SK-N-SH (cell line): ENCODE measurements at regions of chr5 and their contacts with region 1.

Region 1: GRCh38 chr5:138352071-138352721 is at the start of gene KDM3B:
- DNase-seq: peak; percentile 99
- H3K4me3 ChIP-seq: peak within 1 kb of the TSS; percentile 81 to 92
- H3K27ac ChIP-seq: peak within 1 kb of the TSS; percentile 81 to 84
- H3K4me1 ChIP-seq: peaks cover 7 to 9% of the 10 kb centered on the region in 2 experiments; a peak in 3 of 4 replicates
- H3K27me3 ChIP-seq: no peaks in the 10 kb centered on the region
- CTCF ChIP-seq: peak; percentile 99
- EP300 ChIP-seq: no peak
- RAD21 ChIP-seq: peak; percentile 18; the same call in 1 of the 2 replicates
- polyA plus RNA-seq, gene KDM3B: 22.4 and 24.5 TPM in 2 replicates

Region 2: DNA sequence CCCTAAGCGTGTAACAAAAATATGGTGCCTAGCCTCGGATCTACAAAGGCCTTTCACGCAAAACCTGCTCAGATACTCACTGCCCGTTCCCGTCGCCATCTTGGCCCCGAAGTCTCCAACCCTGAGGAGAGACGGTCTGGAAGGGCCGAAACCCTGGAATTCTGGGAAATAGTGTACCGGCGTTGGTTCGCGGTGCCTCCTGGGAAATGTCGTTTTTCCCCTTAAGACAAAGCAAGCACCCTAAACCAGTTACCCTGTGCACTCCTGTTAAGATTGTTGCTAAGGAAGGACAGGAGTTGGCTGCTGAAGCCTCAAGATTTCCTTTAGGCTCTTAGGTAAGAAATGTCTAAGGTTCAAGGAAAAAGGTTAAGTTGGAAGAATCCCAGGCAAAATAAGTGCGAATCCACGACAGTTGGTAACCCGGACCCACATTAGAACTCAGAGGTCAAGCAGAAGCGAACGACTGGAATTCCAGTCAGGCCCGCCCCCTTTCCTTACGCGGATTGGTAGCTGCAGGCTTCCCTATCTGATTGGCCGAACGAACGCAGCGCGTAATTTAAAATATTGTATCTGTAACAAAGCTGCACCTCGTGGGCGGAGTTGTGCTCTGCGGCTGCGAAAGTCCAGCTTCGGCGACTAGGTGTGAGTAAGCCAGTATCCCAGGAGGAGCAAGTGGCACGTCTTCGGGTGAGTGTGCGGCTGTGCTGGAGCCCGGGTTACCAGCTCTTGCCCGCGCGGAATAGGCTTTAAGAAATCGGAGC is 173.5 kb before region 1 on chr5 and contains the starts of genes BRD8 and KIF20A:
- CTCF ChIA-PET with region 1: interaction called, 13 read pairs
- POLR2A ChIA-PET with region 1: interaction called, 4 read pairs
- DNase-seq: peak; percentile 87
- H3K4me3 ChIP-seq: peak within 1 kb of the TSS; percentile 81 to 90
- H3K27ac ChIP-seq: peak within 1 kb of the TSS; percentile 86 to 97
- H3K4me1 ChIP-seq: peaks cover 0 to 13% of the 10 kb centered on the region in 2 experiments; a peak in 2 of 4 replicates
- H3K27me3 ChIP-seq: no peaks in the 10 kb centered on the region
- CTCF ChIP-seq: no peak
- EP300 ChIP-seq: peak in 1 of 2 experiments; percentile 19; a peak in 1 of 4 replicates
- RAD21 ChIP-seq: no peak
- polyA plus RNA-seq, gene BRD8: 46.2 and 64.4 TPM in 2 replicates
- polyA plus RNA-seq, gene KIF20A: 16.0 and 17.4 TPM in 2 replicates

Region 3: DNA sequence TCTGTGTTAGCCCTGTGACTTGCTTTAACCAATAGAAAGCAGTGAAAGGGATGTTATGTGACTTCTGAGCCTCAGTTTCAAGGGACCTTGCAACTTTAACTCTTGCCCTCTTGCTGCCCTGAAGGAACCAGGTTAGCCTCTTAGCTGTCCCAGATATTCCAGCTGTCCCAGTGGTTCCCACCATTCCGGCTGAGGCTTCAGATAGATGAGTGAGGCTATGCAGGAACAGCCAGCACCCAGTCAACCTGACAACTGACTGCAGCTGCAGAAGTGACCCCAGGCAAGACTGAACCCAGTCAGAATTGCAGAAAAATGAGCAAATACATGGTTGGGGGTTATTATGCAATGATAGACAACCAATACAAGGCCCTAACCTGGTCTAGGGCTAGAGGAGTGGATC is 128.7 kb before region 1 on chr5:
- CTCF ChIA-PET with region 1: interaction called, 30 read pairs
- POLR2A ChIA-PET with region 1: no interaction called
- DNase-seq: no peak
- H3K4me3 ChIP-seq: no peak overlapping the region
- H3K27ac ChIP-seq: no peak overlapping the region
- H3K4me1 ChIP-seq: no peaks in the 10 kb centered on the region
- H3K27me3 ChIP-seq: no peaks in the 10 kb centered on the region; the same call in 1 of the 2 replicates
- CTCF ChIP-seq: no peak
- EP300 ChIP-seq: no peak
- RAD21 ChIP-seq: no peak

Region 4: DNA sequence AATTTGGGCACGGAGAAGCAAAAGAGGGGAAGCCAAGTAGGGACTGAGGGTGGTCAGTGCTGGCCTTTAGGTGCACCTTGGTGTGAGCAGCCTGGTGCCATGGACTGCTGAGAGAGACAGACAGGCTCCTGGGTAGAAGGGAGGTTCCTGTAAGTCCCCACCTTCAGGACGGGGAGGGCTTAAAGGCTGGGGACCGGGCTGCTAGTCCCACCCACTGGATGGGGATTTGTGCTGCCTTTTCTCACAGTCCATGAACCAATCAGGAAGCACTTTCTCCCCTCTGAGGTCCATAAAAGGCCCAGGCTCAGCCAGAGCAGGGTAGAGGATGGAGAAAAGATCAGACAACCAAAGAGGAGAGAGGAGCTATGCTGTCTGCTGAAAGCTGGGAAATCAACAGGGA is 35.8 kb before region 1 on chr5:
- CTCF ChIA-PET with region 1: interaction called, 18 read pairs
- POLR2A ChIA-PET with region 1: no interaction called
- DNase-seq: no peak
- H3K4me3 ChIP-seq: no peak overlapping the region
- H3K27ac ChIP-seq: no peak overlapping the region
- H3K4me1 ChIP-seq: no peaks in the 10 kb centered on the region
- H3K27me3 ChIP-seq: no peaks in the 10 kb centered on the region
- CTCF ChIP-seq: no peak
- EP300 ChIP-seq: no peak
- RAD21 ChIP-seq: no peak

Region 5: GRCh38 chr5:138369706-138370105 is 17.5 kb after region 1 on chr5:
- CTCF ChIA-PET with region 1: interaction called, 93 read pairs
- POLR2A ChIA-PET with region 1: interaction called, 4 read pairs
- DNase-seq: no peak
- H3K4me3 ChIP-seq: no peak overlapping the region
- H3K27ac ChIP-seq: no peak overlapping the region
- H3K4me1 ChIP-seq: no peaks in the 10 kb centered on the region; a peak in 1 of 4 replicates
- H3K27me3 ChIP-seq: no peaks in the 10 kb centered on the region
- CTCF ChIP-seq: no peak
- EP300 ChIP-seq: no peak
- RAD21 ChIP-seq: no peak

Region 6: GRCh38 chr5:138438724-138439476 is 86.7 kb after region 1 on chr5 and contains the start of gene REEP2:
- CTCF ChIA-PET with region 1: interaction called, 12 read pairs
- POLR2A ChIA-PET with region 1: interaction called, 3 read pairs
- DNase-seq: peak; percentile 94
- H3K4me3 ChIP-seq: peak within 1 kb of the TSS; percentile 65 to 84
- H3K27ac ChIP-seq: peak within 1 kb of the TSS; percentile 18 to 84; a peak in 3 of 4 replicates
- H3K4me1 ChIP-seq: peaks cover 0 to 21% of the 10 kb centered on the region in 2 experiments; a peak in 1 of 4 replicates
- H3K27me3 ChIP-seq: no peaks in the 10 kb centered on the region
- CTCF ChIP-seq: no peak
- EP300 ChIP-seq: no peak
- RAD21 ChIP-seq: no peak
- polyA plus RNA-seq, gene REEP2: 25.4 and 31.2 TPM in 2 replicates

Region 7: GRCh38 chr5:138716456-138716924 is 364.3 kb after region 1 on chr5:
- CTCF ChIA-PET with region 1: no interaction called
- POLR2A ChIA-PET with region 1: no interaction called
- DNase-seq: peak; percentile 48
- H3K4me3 ChIP-seq: no peak overlapping the region
- H3K27ac ChIP-seq: no peak overlapping the region
- H3K4me1 ChIP-seq: peaks cover 0 to 2% of the 10 kb centered on the region in 2 experiments; a peak in 1 of 4 replicates
- H3K27me3 ChIP-seq: no peaks in the 10 kb centered on the region
- CTCF ChIP-seq: no peak
- EP300 ChIP-seq: no peak
- RAD21 ChIP-seq: no peak